Caco-2 (cell line): ENCODE measurements at regions of chr5 and their contacts with region 1.

Region 1: DNA sequence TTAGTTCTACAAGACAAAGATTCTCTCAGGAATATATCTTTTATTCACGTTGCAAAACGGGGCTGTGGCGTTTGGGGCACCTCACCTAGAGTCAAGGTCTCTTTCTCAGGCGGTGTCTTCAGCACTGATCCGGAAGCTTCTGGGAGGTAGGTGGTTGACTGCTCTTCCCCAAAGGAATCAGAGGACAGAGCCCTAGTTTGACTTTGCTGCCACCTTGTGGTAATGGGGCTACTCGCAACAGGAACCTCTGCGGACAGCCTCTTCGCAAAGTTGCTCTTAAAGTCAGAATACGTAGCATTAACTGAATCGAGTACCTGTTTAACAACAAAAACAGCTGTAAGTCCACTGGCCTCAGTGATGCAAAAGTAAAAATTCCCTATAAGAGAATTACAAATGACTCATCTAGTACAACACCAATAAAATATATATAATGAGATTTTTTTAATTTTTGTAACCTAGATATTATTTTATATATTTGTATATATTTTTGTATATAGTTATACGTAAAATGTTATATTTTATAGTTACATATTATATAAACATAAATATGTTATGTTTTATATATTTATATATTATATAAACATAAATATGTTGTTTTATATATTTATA is 13.3 kb upstream of the GPX8 start:
- DNase-seq: peak; percentile 85 to 90
- H3K4me3 ChIP-seq: no peak overlapping the region
- H3K4me3 Mint-ChIP-seq: no peak overlapping the region
- H3K27ac Mint-ChIP-seq: no peak overlapping the region
- H3K4me1 ChIP-seq: no peaks in the 10 kb centered on the region
- H3K4me1 Mint-ChIP-seq: no peaks in the 10 kb centered on the region
- H3K27me3 ChIP-seq: no peaks in the 10 kb centered on the region
- H3K27me3 Mint-ChIP-seq: peaks cover 18% of the 10 kb centered on the region
- CTCF ChIP-seq: peak; percentile 95 to 96

Region 2: DNA sequence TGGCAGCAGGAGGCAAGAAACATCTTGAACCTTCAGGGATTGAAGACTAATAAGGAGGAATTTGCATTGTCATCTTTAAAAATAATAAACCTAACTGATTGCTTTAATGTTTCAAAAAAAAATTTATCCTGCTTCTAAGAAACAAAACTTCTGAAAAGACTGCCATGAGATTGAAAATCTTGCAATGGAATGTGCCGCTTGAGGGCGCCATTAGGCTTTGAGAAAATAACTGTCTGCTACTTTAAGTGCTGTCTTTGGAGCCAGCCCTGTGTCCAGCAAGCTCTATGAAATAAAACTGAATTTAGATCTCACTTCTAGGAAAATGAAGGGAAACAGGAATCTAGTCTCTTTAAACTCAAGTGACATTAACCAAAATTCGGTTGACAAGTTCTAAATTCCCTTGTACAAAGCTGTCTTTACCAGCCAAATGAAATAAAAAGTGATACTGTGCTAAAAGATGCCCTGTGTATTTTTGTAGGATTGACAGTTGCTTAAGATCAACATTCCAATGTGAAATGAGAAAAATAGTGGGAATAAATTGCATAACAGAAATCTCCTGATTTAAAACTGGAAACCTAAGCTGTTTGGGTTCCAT is 240.6 kb before region 1 on chr5:
- CTCF ChIA-PET with region 1: interaction called, 8 read pairs
- POLR2A ChIA-PET with region 1: no interaction called
- intact Hi-C with region 1: loop called (anchors 1 kb)
- DNase-seq: peak; percentile 45 to 67
- H3K4me3 ChIP-seq: no peak overlapping the region
- H3K4me3 Mint-ChIP-seq: no peak overlapping the region
- H3K27ac Mint-ChIP-seq: no peak overlapping the region
- H3K4me1 ChIP-seq: no peaks in the 10 kb centered on the region
- H3K4me1 Mint-ChIP-seq: no peaks in the 10 kb centered on the region
- H3K27me3 ChIP-seq: no peaks in the 10 kb centered on the region
- H3K27me3 Mint-ChIP-seq: peaks cover 18% of the 10 kb centered on the region
- CTCF ChIP-seq: peak; percentile 66 to 71

Region 3: GRCh38 chr5:54917323-54917722 is 229.3 kb before region 1 on chr5:
- CTCF ChIA-PET with region 1: no interaction called
- POLR2A ChIA-PET with region 1: no interaction called
- intact Hi-C with region 1: no loop called
- DNase-seq: no peak
- H3K4me3 ChIP-seq: no peak overlapping the region
- H3K4me3 Mint-ChIP-seq: no peak overlapping the region
- H3K27ac Mint-ChIP-seq: no peak overlapping the region
- H3K4me1 ChIP-seq: no peaks in the 10 kb centered on the region
- H3K4me1 Mint-ChIP-seq: no peaks in the 10 kb centered on the region
- H3K27me3 ChIP-seq: no peaks in the 10 kb centered on the region
- H3K27me3 Mint-ChIP-seq: peaks cover 20% of the 10 kb centered on the region
- CTCF ChIP-seq: no peak

Region 4: GRCh38 chr5:54944364-54944763 is 202.3 kb before region 1 on chr5:
- CTCF ChIA-PET with region 1: interaction called, 17 read pairs
- POLR2A ChIA-PET with region 1: no interaction called
- intact Hi-C with region 1: loop called (anchors 1 kb)
- DNase-seq: peak in 1 of 2 experiments; percentile 10
- H3K4me3 ChIP-seq: no peak overlapping the region
- H3K4me3 Mint-ChIP-seq: no peak overlapping the region
- H3K27ac Mint-ChIP-seq: no peak overlapping the region
- H3K4me1 ChIP-seq: no peaks in the 10 kb centered on the region
- H3K4me1 Mint-ChIP-seq: no peaks in the 10 kb centered on the region
- H3K27me3 ChIP-seq: no peaks in the 10 kb centered on the region
- H3K27me3 Mint-ChIP-seq: peaks cover 20% of the 10 kb centered on the region
- CTCF ChIP-seq: peak; percentile 60 to 76